Activated naive CD4-positive, alpha-beta T cell treated with anti-CD3 and anti-CD28 coated beads for 36 hours (primary cell): ENCODE measurements at regions of chr10 and their contacts with region 1.

Region 1: GRCh38 chr10:104622598-104623209 is 18.4 kb upstream of the SORCS3 start:
- DNase-seq: peak; percentile 42
- H3K4me3 Mint-ChIP-seq: no peak overlapping the region
- H3K27ac Mint-ChIP-seq: no peak overlapping the region
- H3K4me1 Mint-ChIP-seq: no peaks in the 10 kb centered on the region
- H3K27me3 Mint-ChIP-seq: peaks cover 20% of the 10 kb centered on the region

Region 2: GRCh38 chr10:104291439-104291951 is 331.2 kb before region 1 on chr10:
- CTCF ChIA-PET with region 1: no interaction called
- intact Hi-C with region 1: loop called (anchors 5 kb)
- DNase-seq: peak; percentile 93
- H3K4me3 Mint-ChIP-seq: peak overlapping the region; percentile 10
- H3K27ac Mint-ChIP-seq: no peak overlapping the region
- H3K4me1 Mint-ChIP-seq: peaks cover 19% of the 10 kb centered on the region
- H3K27me3 Mint-ChIP-seq: peaks cover 3% of the 10 kb centered on the region

Region 3: DNA sequence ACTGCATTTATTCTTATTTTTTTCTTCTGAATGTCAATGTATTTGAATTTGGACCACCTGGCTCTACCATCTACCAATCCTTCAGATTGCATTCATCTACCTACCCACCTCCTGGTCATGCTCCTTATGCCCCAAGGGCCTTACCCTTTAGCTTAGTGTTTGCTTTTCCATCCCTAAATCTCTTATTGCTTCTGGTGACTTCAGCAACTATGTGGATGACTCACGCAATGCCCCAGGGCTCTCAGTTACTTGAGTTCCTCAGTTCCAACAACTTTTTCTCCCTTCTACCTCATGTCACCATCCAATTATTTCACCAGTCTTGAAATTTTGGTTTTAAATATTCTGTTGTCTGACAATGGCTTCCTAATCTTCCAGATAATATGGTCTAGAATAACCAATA is 150.2 kb before region 1 on chr10:
- CTCF ChIA-PET with region 1: no interaction called
- intact Hi-C with region 1: no loop called
- DNase-seq: no peak
- H3K4me3 Mint-ChIP-seq: no peak overlapping the region
- H3K27ac Mint-ChIP-seq: no peak overlapping the region
- H3K4me1 Mint-ChIP-seq: no peaks in the 10 kb centered on the region
- H3K27me3 Mint-ChIP-seq: peaks cover 5% of the 10 kb centered on the region

Region 4: DNA sequence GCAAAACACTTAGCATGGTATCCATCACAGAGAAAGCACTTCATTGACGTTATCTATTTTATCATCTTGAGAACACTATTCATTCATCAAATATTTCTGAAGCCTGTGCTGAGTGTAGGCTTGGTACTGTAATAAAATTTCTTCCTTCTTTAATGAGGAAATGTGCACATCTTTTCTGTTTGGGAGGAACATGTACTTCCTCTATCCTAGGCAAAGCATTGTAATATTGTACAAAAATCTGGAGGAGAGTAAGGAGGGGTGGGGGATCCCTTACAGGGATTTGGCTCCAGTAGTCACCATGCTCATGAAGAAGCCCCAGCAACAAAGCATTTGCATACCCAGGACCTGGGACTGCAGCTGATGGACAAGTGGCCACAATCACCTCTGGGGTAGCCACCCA is 21.5 kb before region 1 on chr10:
- CTCF ChIA-PET with region 1: no interaction called
- intact Hi-C with region 1: no loop called
- DNase-seq: no peak
- H3K4me3 Mint-ChIP-seq: no peak overlapping the region
- H3K27ac Mint-ChIP-seq: no peak overlapping the region
- H3K4me1 Mint-ChIP-seq: no peaks in the 10 kb centered on the region
- H3K27me3 Mint-ChIP-seq: peaks cover 5% of the 10 kb centered on the region